K562 (cell line): ENCODE measurements at regions of chr1 and their contacts with region 1.

Region 1: DNA sequence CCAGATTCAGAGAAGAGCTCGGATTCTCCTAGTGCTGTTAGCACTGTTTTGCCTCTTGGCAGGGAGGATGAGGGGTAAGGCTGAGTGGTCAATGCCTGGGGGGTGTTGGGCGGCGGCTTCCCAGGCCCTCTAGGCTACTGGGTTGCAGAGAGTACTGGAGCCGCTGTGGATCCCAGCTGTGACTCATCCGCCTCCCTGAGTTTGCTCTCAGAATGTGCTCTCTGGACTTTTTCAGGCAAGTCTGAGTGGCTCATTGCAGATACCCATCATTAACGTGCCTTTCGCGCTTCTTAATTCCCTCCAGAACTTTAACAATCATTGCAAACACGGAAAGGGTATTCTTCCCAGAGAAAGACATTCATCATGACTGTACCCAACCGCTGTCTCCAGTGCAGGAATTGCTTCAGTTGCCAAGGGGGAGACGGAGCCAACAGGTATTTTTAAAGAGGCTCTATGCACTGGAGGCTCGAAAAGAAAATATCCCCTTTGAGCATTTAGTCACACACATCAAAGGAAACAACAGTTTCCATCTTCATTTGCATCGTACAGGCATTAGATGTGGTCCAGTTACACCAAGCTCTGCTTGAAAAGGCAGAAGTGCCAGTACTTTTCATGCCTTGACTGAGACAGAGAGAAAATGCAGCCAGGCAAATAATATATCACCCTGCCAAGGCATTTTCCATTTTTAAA is 14.4 kb upstream of the CAMTA1 start:
- DNase-seq: no peak
- ATAC-seq: peak; percentile 75
- H3K4me3 ChIP-seq: no peak overlapping the region
- H3K27ac ChIP-seq: no peak overlapping the region
- H3K4me1 ChIP-seq: no peaks in the 10 kb centered on the region
- H3K27me3 ChIP-seq: peaks cover 30 to 39% of the 10 kb centered on the region in 2 experiments
- CTCF ChIP-seq: no peak
- EP300 ChIP-seq: no peak
- POLR2A ChIP-seq: no peak
- RAD21 ChIP-seq: no peak

Region 2: DNA sequence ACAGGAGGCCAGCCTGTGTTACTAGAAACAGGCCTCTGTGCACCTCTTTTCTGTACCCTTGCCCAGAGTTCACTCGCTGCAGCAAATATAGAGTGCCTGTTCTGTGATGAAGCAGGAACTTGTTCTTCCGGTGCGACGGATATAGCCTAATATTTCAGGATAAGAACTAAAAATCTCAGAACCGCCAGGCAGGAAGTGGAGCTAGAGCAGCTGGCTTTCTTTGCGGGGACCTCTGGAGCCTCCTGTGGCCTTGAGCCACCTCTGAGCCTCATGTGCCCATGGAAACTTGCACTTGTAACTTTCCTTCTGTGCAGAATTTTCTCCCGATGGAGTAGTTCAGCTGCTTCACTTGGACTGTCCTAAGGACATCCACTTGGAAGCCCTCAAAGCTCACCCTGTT is 955.7 kb after region 1 on chr1:
- CTCF ChIA-PET with region 1: no interaction called
- POLR2A ChIA-PET with region 1: no interaction called
- in situ Hi-C with region 1: no loop called
- intact Hi-C with region 1: loop called (anchors 10 kb)
- DNase-seq: no peak
- ATAC-seq: no peak
- H3K4me3 ChIP-seq: no peak overlapping the region
- H3K27ac ChIP-seq: no peak overlapping the region
- H3K4me1 ChIP-seq: no peaks in the 10 kb centered on the region
- H3K27me3 ChIP-seq: peaks cover 70 to 75% of the 10 kb centered on the region in 2 experiments
- CTCF ChIP-seq: no peak
- EP300 ChIP-seq: no peak
- POLR2A ChIP-seq: no peak
- RAD21 ChIP-seq: no peak